PC-9 (cell line): ENCODE measurements at regions of chr6 and their contacts with region 1.

Region 1: DNA sequence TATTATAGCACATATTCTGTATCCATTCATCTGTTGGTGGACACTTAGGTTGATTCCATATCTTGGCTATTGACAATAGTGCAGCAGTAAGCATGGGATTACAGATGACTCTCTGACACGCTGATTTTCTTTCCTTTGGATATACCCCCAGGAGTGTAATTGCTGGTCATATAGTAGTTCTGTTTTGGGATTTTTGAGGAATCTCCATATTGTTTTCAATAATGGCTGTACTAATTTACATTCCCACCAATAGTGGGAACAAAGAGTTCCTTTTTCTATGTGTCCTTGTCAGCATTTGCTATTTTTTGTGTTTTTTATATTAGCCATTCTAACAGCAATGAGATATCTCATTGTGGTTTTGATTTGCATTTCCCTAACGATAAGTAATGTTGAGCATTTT is 309.0 kb upstream of the JARID2 start:
- DNase-seq: no peak
- H3K4me3 ChIP-seq: no peak overlapping the region
- H3K27ac ChIP-seq: no peak overlapping the region
- H3K4me1 ChIP-seq: no peaks in the 10 kb centered on the region
- H3K27me3 ChIP-seq: no peaks in the 10 kb centered on the region
- CTCF ChIP-seq: no peak

Region 2: DNA sequence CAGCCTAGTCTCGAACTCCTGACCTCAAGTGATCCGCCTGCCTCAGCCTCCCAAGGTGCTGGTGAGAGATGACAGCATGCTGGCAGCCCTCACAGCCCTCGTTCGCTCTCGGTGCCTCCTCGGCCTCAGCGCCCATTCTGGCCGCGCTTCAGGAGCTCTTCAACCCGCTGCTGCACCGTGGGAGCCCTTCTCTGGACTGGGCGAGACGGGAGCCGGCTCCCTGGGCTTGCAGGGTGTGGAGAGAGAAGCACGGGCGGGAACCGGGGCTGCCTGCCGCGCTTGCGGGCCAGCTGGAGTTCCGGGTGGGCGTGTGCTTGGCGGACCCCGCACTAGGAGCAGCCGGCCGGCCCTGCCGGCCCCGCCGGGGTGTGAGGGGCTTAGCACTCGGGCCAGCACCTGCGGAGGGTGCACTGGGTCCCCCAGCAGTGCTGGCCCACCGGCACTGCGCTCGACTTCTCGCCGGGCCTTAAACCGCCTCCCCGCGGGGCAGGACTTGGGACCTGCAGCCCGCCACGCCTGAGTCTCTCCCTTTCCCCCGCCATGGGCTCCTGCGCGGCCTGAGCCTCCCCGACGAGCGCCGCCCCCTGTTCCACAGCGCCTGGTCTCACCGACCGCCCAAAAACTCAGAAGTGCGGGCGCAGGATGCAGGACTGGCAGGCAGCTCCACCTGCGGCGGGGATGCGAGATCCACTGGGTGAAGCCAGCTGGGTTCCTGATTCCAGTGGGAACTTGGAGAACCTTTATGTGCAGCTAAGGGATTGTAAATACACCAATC is 1193.7 kb before region 1 on chr6:
- CTCF ChIA-PET with region 1: interaction called, 10 read pairs
- POLR2A ChIA-PET with region 1: no interaction called
- intact Hi-C with region 1: no loop called
- DNase-seq: no peak
- H3K4me3 ChIP-seq: no peak overlapping the region
- H3K27ac ChIP-seq: no peak overlapping the region
- H3K4me1 ChIP-seq: no peaks in the 10 kb centered on the region
- H3K27me3 ChIP-seq: no peaks in the 10 kb centered on the region
- CTCF ChIP-seq: no peak